Breast epithelium (tissue), 4 donors: ENCODE measurements at regions of chr2 and their contacts with region 1.

Region 1: GRCh38 chr2:209988010-209988409 is 14.4 kb upstream of the RPE start:
- DNase-seq: no peak
- H3K4me3 ChIP-seq: no peak overlapping the region
- H3K27ac ChIP-seq: no peak overlapping the region
- H3K4me1 ChIP-seq: no peaks in the 10 kb centered on the region
- H3K27me3 ChIP-seq: no peaks in the 10 kb centered on the region
- CTCF ChIP-seq: no peak
- POLR2A ChIP-seq: no peak

Region 2: GRCh38 chr2:209463226-209463625 is 524.8 kb before region 1 on chr2:
- intact Hi-C with region 1: no loop called
- DNase-seq: no peak
- H3K4me3 ChIP-seq: no peak overlapping the region
- H3K27ac ChIP-seq: no peak overlapping the region
- H3K4me1 ChIP-seq: no peaks in the 10 kb centered on the region
- H3K27me3 ChIP-seq: no peaks in the 10 kb centered on the region
- CTCF ChIP-seq: no peak
- POLR2A ChIP-seq: no peak

Region 3: GRCh38 chr2:209614690-209615369 is 373.2 kb before region 1 on chr2:
- intact Hi-C with region 1: loop called (anchors 5 kb)
- DNase-seq: no peak
- H3K4me3 ChIP-seq: no peak overlapping the region
- H3K27ac ChIP-seq: no peak overlapping the region
- H3K4me1 ChIP-seq: no peaks in the 10 kb centered on the region
- H3K27me3 ChIP-seq: no peaks in the 10 kb centered on the region
- CTCF ChIP-seq: no peak
- POLR2A ChIP-seq: no peak

Region 4: DNA sequence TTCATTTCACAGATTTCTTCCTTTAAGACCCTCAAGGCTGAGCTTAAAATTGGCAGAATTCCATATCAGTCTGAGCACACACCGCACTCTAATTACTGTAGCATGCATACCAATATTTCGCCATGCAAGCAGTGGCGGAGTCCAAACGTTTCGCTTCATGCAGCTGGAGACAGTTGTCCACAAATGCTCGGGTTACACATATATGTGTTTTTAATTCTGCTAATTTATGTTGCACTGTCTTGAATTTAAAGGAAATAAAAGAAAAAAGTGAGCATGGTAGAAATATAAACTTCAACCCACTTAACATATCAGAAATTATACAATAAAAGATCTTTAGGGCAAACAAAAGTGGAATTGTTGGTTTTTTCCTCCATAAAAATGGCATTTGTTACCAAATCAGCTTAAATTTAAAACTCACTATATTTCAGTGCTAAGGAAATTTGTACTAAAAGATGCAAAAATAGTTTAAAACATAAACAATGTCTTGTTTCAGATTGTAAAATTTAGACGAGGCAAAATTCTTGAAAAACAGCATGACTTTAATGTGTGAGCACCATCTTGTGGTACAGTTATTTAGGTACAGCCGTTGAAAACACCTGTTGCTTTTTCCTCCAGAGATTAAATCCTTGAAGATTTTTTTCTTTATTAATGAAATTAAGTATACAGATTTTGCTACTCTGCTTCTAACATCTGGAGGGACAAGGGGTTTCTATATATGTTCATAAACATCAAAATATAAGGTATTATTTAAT is 207.3 kb after region 1 on chr2:
- intact Hi-C with region 1: loop called (anchors 10 kb)
- DNase-seq: no peak
- H3K4me3 ChIP-seq: no peak overlapping the region
- H3K27ac ChIP-seq: no peak overlapping the region
- H3K4me1 ChIP-seq: no peaks in the 10 kb centered on the region
- H3K27me3 ChIP-seq: peaks cover 0 to 8% of the 10 kb centered on the region in 2 donors
- CTCF ChIP-seq: peak; percentile 10 to 74 (median 67)
- POLR2A ChIP-seq: no peak